PC-3 (cell line): ENCODE measurements at regions of chr7 and their contacts with region 1.

Region 1: DNA sequence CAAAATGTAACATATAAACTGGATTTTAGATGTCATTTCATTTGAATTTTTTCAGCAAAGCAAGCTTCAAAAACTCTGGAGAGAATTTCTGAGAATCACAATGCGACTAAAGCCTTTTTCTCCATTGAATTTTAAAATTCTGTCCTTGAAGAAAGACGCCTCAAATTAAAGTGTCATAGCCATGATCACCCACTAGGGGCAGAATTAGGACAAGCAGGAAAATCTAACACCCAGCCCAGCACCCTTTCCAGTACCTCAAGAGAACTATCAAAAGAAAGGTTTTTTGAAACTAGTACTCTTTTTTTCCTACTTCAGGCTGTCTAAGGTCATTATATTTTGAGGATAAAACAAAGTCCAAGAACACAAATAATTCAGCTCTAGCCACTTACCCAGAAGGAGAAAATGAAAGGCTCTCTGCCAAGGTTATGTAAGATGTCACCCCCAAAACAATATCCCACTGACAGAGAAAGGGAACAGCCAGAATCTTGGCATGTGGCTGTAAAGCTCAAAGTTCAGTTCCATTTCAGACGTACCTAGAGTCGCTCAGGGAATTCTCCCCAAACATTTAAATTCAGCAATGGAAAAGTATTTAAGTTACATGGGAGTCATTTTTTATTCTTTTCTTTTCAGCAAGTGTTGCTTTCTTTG is 299.4 kb downstream of the SNX13 start:
- DNase-seq: peak; percentile 64
- ATAC-seq: no peak
- H3K4me3 ChIP-seq: no peak overlapping the region
- H3K27ac ChIP-seq: no peak overlapping the region
- H3K4me1 ChIP-seq: no peaks in the 10 kb centered on the region
- H3K27me3 ChIP-seq: no peaks in the 10 kb centered on the region
- CTCF ChIP-seq: peak; percentile 76

Region 2: GRCh38 chr7:17444673-17445072 is 196.2 kb before region 1 on chr7:
- CTCF ChIA-PET with region 1: no interaction called
- POLR2A ChIA-PET with region 1: no interaction called
- intact Hi-C with region 1: loop called (anchors 10 kb)
- DNase-seq: peak; percentile 70
- ATAC-seq: peak; percentile 70
- H3K4me3 ChIP-seq: no peak overlapping the region
- H3K27ac ChIP-seq: no peak overlapping the region
- H3K4me1 ChIP-seq: peaks cover 21% of the 10 kb centered on the region
- H3K27me3 ChIP-seq: no peaks in the 10 kb centered on the region
- CTCF ChIP-seq: no peak